Ascending aorta (tissue), 2 donors: ENCODE measurements at regions of chr1 and their contacts with region 1.

Region 1: DNA sequence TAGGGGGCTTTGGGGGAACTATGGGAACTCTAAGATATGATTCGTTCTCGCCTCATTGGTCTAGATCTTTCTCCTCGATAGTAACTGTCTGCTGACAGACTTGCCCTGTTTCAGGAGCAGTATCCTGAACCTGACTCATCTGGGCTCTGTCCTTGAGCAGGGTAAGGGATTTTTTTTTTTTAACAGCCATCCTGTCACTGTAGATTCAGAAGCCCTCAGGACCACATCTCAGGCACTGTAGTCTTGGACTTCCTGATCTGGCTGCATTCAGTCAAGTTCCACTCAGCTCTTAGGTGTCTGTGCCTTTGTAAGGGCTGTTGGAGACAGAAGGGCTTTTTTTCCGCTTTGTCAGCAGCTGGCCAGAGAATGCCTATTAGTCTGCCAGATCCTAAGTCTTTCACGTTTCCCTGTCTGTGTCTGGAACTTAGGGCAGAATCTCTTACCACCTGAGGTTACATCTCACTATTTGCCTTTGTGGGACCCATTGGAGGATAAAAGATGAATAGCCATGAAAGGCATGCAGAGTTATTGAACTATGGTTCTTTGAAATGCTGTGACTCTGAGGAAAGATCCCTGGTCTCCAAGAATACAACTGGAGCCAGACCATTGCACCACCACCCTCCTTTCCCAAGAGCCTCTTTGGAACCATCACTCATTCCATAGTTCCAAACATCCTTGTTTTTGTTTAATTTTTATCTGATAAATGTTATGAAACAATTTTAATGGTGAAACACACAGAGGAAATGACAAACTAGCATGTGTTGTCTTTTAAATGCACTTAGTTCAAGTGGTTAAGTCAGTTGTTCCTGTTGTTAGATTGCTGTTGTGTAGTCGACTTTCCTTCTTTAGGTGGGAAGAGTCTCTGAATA is 49.7 kb upstream of the MACF1 start:
- DNase-seq: peak in 1 of 2 donors; percentile 74
- H3K4me3 ChIP-seq: no peak overlapping the region
- H3K27ac ChIP-seq: peak overlapping the region; percentile 57 to 60
- H3K4me1 ChIP-seq: peaks cover 20 to 62% of the 10 kb centered on the region in 2 donors
- H3K27me3 ChIP-seq: no peaks in the 10 kb centered on the region
- CTCF ChIP-seq: no peak

Region 2: GRCh38 chr1:39127513-39127912 is 27.3 kb before region 1 on chr1:
- intact Hi-C with region 1: loop called (anchors 2 kb)
- DNase-seq: peak in 1 of 2 donors; percentile 71
- H3K4me3 ChIP-seq: no peak overlapping the region
- H3K27ac ChIP-seq: peak overlapping the region; percentile 57 to 60
- H3K4me1 ChIP-seq: peaks cover under 1 to 35% of the 10 kb centered on the region in 2 donors
- H3K27me3 ChIP-seq: no peaks in the 10 kb centered on the region
- CTCF ChIP-seq: no peak